OCI-LY7 (cell line): ENCODE measurements at regions of chr20 and their contacts with region 1.

Region 1: GRCh38 chr20:47272893-47273590 is 83.5 kb downstream of the ZMYND8 start:
- DNase-seq: peak; percentile 75
- H3K4me3 ChIP-seq: no peak overlapping the region
- H3K27ac ChIP-seq: peak overlapping the region; percentile 3
- H3K4me1 ChIP-seq: peaks cover 39% of the 10 kb centered on the region
- CTCF ChIP-seq: peak; percentile 98

Region 2: DNA sequence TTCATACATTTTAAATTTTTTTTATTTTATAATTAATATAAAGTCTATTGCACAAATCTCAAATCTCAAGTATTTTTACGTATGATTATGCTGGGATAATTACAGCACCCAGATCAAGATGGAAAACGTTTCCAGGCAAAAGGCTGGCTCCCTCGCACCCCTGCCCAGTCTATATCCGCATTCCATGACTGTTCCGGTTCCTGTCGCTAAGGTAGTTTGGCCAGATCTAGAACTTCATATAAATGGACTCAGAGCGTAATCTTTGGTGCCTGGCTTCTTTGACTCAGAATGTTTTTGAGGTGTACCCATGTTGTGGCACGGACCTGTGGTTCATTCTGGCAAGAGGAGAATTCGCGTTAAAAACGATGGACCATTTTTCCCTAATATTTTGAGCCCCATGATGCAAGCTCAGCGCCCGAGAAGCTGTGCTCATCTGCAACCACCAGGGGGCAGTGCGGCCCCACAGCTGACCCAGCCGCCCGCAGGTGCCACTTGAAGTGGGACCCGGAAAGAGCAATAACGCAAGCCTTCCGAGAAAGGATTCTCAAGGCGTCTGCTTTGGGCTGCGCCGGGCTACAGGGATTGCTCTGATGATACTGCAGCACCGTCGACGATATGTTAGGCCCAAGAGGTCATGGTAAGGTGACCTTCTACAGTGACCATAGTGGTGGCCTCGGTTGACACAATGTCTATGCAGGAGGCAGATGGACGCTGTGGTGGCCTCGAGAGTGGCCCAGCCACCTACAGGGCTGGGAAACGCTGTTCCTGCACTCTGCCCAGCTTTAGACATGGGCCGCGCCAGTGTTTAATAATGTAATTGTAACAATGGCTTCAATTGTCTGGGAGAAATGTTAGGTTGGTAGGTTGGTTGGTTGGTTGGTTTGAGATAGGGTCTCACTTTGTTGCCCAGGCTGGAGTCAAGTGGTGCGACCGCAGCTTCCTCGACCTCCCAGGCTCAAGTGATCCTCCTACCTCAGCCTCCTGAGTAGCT is 76.7 kb before region 1 on chr20:
- CTCF ChIA-PET with region 1: no interaction called
- POLR2A ChIA-PET with region 1: no interaction called
- intact Hi-C with region 1: loop called (anchors 5 kb)
- DNase-seq: peak; percentile 87
- H3K4me3 ChIP-seq: peak overlapping the region; percentile 34
- H3K27ac ChIP-seq: no peak overlapping the region
- H3K4me1 ChIP-seq: peaks cover 4% of the 10 kb centered on the region
- CTCF ChIP-seq: peak; percentile 99

Region 3: GRCh38 chr20:47262365-47263013 is 10.6 kb before region 1 on chr20:
- CTCF ChIA-PET with region 1: interaction called, 11 read pairs
- POLR2A ChIA-PET with region 1: interaction called, 15 read pairs
- intact Hi-C with region 1: no loop called
- DNase-seq: peak; percentile 93
- H3K4me3 ChIP-seq: peak overlapping the region; percentile 62
- H3K27ac ChIP-seq: peak overlapping the region; percentile 99
- H3K4me1 ChIP-seq: peaks cover 89% of the 10 kb centered on the region
- CTCF ChIP-seq: no peak